ENCODE measurements at regions of chr3 and their contacts with region 1.

Region 1: GRCh38 chr3:128617557-128618397 is 32.8 kb downstream of the RPN1 start:
- DNase-seq: peak; percentile 99
- ATAC-seq: peak; percentile 95
- H3K4me3 ChIP-seq: peak overlapping the region; percentile 67 to 98 (median 78)
- H3K4me3 Mint-ChIP-seq: peak overlapping the region; percentile 96
- H3K27ac ChIP-seq: peak overlapping the region; percentile 71 to 90
- H3K27ac Mint-ChIP-seq: peak overlapping the region; percentile 91
- H3K4me1 ChIP-seq: peaks cover 11 to 23% of the 10 kb centered on the region in 2 donors
- H3K4me1 Mint-ChIP-seq: peaks cover 25% of the 10 kb centered on the region
- H3K27me3 ChIP-seq: no peaks in the 10 kb centered on the region
- H3K27me3 Mint-ChIP-seq: no peaks in the 10 kb centered on the region
- CTCF ChIP-seq: peak; percentile 99

Region 2: DNA sequence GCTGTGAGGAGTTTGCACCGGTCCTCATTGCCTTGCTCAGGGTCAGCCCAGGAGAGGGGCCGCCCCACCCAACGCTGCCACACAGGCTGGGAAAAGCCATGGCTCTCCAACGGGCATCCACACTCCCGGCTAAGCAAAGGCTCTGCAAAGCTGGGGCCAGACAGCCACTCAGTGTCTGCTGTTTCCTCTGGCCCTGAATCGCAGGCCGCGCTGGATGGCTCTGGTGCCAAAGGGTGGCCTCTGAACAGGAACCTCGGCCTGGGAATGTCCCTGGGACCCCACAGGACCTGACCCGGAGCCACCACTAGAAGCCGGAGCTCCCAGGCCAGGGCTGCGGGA is 10.1 kb before region 1 on chr3:
- CTCF ChIA-PET with region 1: interaction called, 32 read pairs
- POLR2A ChIA-PET with region 1: no interaction called
- intact Hi-C with region 1: no loop called
- DNase-seq: no peak
- ATAC-seq: no peak
- H3K4me3 ChIP-seq: peak overlapping the region in 4 of 5 experiments; percentile 58 to 65 (median 62)
- H3K4me3 Mint-ChIP-seq: peak overlapping the region; percentile 68
- H3K27ac ChIP-seq: peak overlapping the region in 1 of 2 donors; percentile 25
- H3K27ac Mint-ChIP-seq: no peak overlapping the region
- H3K4me1 ChIP-seq: peaks cover 7 to 9% of the 10 kb centered on the region in 2 donors
- H3K4me1 Mint-ChIP-seq: peaks cover 2% of the 10 kb centered on the region
- H3K27me3 ChIP-seq: peaks cover 0 to 11% (median 3%) of the 10 kb centered on the region in 4 experiments
- H3K27me3 Mint-ChIP-seq: no peaks in the 10 kb centered on the region
- CTCF ChIP-seq: no peak

Region 3: DNA sequence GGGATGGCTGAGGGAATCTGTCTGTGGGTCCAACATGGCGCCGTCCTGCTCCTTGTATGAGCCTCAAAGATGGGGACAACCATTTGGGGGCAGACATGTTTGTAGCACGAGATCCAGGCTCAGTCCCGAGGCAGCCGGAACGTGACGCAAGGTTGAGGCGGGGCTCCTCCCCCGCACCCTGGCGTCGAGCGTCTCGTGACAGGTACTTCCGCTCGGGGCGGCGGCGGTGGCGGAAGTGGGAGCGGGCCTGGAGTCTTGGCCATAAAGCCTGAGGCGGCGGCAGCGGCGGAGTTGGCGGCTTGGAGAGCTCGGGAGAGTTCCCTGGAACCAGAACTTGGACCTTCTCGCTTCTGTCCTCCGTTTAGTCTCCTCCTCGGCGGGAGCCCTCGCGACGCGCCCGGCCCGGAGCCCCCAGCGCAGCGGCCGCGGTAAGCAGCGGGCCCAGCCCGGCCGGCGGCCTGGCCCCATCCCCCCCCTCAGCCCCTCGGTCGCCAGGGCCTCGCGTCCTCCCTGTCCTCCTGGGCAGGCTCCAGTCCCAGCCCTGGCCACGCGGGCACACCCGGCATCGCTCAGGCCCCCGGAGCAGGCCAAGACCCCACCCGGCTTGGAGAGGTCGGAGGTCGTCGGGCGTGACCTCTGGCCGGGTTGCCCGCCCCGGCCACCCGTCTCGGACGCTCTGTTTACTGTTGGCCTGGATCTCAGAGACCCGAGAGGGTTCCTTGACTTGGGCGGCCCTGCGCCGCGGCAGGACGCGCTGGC is 108.3 kb after region 1 on chr3 and contains the start of gene RAB7A:
- CTCF ChIA-PET with region 1: interaction called, 5 read pairs
- POLR2A ChIA-PET with region 1: no interaction called
- intact Hi-C with region 1: loop called (anchors 1 kb)
- DNase-seq: peak; percentile 99
- ATAC-seq: peak; percentile 96
- H3K4me3 ChIP-seq: peak within 1 kb of the TSS; percentile 79 to 98 (median 93)
- H3K4me3 Mint-ChIP-seq: peak within 1 kb of the TSS; percentile 99
- H3K27ac ChIP-seq: peak within 1 kb of the TSS; percentile 92 to 99
- H3K27ac Mint-ChIP-seq: peak within 1 kb of the TSS; percentile 100
- H3K4me1 ChIP-seq: peaks cover 45 to 46% of the 10 kb centered on the region in 2 donors
- H3K4me1 Mint-ChIP-seq: peaks cover 52% of the 10 kb centered on the region
- H3K27me3 ChIP-seq: no peaks in the 10 kb centered on the region
- H3K27me3 Mint-ChIP-seq: peaks cover 7% of the 10 kb centered on the region
- CTCF ChIP-seq: no peak
- total RNA-seq, gene RAB7A: 138 and 144 TPM in 2 replicates

Region 4: GRCh38 chr3:128804017-128804810 is 186.4 kb after region 1 on chr3:
- CTCF ChIA-PET with region 1: interaction called, 14 read pairs
- POLR2A ChIA-PET with region 1: no interaction called
- intact Hi-C with region 1: no loop called
- DNase-seq: peak; percentile 84
- ATAC-seq: peak; percentile 95
- H3K4me3 ChIP-seq: peak overlapping the region; percentile 13 to 55 (median 28)
- H3K4me3 Mint-ChIP-seq: peak overlapping the region; percentile 69
- H3K27ac ChIP-seq: peak overlapping the region; percentile 58 to 89
- H3K27ac Mint-ChIP-seq: peak overlapping the region; percentile 84
- H3K4me1 ChIP-seq: peaks cover 19 to 21% of the 10 kb centered on the region in 2 donors
- H3K4me1 Mint-ChIP-seq: peaks cover 56% of the 10 kb centered on the region
- H3K27me3 ChIP-seq: no peaks in the 10 kb centered on the region
- H3K27me3 Mint-ChIP-seq: no peaks in the 10 kb centered on the region
- CTCF ChIP-seq: no peak

Region 5: GRCh38 chr3:128879125-128879969 is 261.6 kb after region 1 on chr3 and contains the start of gene ACAD9:
- CTCF ChIA-PET with region 1: interaction called, 9 read pairs
- POLR2A ChIA-PET with region 1: no interaction called
- intact Hi-C with region 1: loop called (anchors 1 kb)
- DNase-seq: peak; percentile 97
- ATAC-seq: peak; percentile 96
- H3K4me3 ChIP-seq: peak within 1 kb of the TSS; percentile 86 to 97 (median 88)
- H3K4me3 Mint-ChIP-seq: peak within 1 kb of the TSS; percentile 95
- H3K27ac ChIP-seq: peak within 1 kb of the TSS; percentile 93 to 98
- H3K27ac Mint-ChIP-seq: peak within 1 kb of the TSS; percentile 95
- H3K4me1 ChIP-seq: peaks cover 24 to 31% of the 10 kb centered on the region in 2 donors
- H3K4me1 Mint-ChIP-seq: peaks cover 55% of the 10 kb centered on the region
- H3K27me3 ChIP-seq: no peaks in the 10 kb centered on the region
- H3K27me3 Mint-ChIP-seq: no peaks in the 10 kb centered on the region
- CTCF ChIP-seq: no peak
- total RNA-seq, gene ACAD9: 57.6 and 71.8 TPM in 2 replicates